GM12878 (cell line): ENCODE measurements at regions of chr14 and their contacts with region 1.

Region 1: DNA sequence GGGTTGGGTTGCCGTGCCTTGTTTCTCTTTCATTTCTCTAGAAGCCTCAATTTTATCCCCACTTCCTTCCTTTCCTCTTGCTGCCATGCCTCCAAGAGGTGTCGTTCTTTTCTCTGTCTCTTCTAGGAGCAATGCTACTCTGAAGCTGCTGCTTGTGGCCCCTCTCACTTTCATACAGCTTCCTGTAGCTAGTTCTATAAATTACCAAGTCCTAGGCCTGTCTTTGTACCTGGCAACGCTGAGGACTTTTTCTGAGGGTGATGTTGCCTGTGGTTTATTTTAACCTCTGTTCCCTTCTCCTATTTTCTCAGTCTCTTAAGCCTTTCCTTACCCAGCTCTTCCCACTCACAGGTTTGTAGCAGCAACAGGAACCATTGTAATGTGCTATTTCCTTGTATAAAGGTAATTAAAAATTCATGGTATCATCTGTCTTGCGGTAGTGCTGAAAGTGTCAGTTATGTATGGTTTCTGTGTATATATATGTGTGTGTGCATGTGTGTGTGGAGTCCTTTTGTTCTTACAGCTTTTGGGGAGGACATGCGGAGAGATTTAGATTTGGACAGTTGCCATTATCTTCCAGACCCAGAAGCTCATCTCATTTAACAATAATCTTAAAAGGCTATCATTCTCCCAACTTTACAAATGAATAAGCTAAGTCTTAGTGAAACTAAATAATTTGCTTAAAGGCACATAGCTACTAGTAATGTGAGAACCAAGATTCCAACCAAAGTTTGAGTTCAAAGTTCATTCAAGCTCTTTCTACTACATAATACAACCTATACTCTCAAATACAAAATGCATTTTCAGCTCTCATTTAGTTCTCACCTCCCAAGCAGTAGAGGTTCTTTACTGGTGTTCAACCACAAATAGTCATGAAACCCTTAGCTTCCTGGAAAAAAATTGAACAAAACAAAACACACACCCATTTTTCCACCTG is 43.8 kb downstream of the DDHD1 start:
- DNase-seq: peak; percentile 82
- ATAC-seq: peak; percentile 87
- H3K4me3 ChIP-seq: peak overlapping the region; percentile 63
- H3K27ac ChIP-seq: peak overlapping the region; percentile 98
- H3K4me1 ChIP-seq: peaks cover 22% of the 10 kb centered on the region
- H3K27me3 ChIP-seq: no peaks in the 10 kb centered on the region
- CTCF ChIP-seq: no peak
- EP300 ChIP-seq: peak; percentile 16 to 62; a peak in 1 of 4 replicates
- POLR2A ChIP-seq: no peak; the same call in 1 of the 2 replicates
- RAD21 ChIP-seq: peak; percentile 25; the same call in 1 of the 2 replicates

Region 2: GRCh38 chr14:53093206-53093605 is 16.2 kb before region 1 on chr14:
- CTCF ChIA-PET with region 1: interaction called, 6 read pairs
- POLR2A ChIA-PET with region 1: interaction called, 4 read pairs
- RAD21 ChIA-PET with region 1: interaction called, 17 read pairs
- SMC1A ChIA-PET with region 1: interaction called, 42 read pairs
- in situ Hi-C with region 1: no loop called
- intact Hi-C with region 1: no loop called
- DNase-seq: no peak
- ATAC-seq: no peak
- H3K4me3 ChIP-seq: no peak overlapping the region
- H3K27ac ChIP-seq: no peak overlapping the region
- H3K4me1 ChIP-seq: no peaks in the 10 kb centered on the region
- H3K27me3 ChIP-seq: no peaks in the 10 kb centered on the region
- CTCF ChIP-seq: no peak
- EP300 ChIP-seq: no peak
- POLR2A ChIP-seq: no peak
- RAD21 ChIP-seq: no peak

Region 3: DNA sequence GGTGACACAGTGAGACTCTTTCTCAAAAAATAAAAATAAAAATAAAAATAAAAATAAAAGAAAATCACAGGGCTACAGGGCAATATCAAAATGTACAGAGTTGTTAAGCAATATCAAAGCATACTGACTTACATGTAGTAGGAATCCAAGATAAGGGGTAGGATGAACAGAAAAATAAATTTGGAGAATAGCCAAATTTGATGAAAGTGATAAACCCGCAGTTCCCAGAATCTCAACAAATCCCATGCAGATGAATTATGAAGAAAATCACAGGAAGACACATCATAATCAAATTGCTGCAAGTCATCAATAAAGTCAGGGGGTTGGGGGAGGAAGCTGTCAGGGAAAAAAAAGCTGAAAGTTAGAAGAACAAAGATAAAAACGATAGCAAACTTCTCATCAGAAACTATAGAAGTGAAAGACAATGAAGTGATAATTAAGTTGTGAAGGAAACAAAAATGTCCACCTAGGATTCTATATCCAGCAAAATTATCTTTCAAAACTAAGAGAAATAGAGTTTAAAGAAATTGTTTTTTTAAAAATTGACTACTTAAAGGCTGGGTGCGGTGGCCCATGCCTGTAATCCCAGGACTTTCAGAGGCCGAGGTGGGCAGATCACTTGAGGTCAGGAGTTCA is 28.3 kb after region 1 on chr14:
- CTCF ChIA-PET with region 1: interaction called, 3 read pairs
- POLR2A ChIA-PET with region 1: interaction called, 3 read pairs
- RAD21 ChIA-PET with region 1: interaction called, 10 read pairs
- SMC1A ChIA-PET with region 1: interaction called, 8 read pairs
- in situ Hi-C with region 1: no loop called
- intact Hi-C with region 1: no loop called
- DNase-seq: no peak
- ATAC-seq: no peak
- H3K4me3 ChIP-seq: no peak overlapping the region
- H3K27ac ChIP-seq: no peak overlapping the region
- H3K4me1 ChIP-seq: peaks cover 5% of the 10 kb centered on the region; the same call in 1 of the 2 replicates
- H3K27me3 ChIP-seq: no peaks in the 10 kb centered on the region
- CTCF ChIP-seq: no peak
- EP300 ChIP-seq: no peak
- POLR2A ChIP-seq: no peak
- RAD21 ChIP-seq: no peak

Region 4: GRCh38 chr14:53152890-53153701 is 43.7 kb after region 1 on chr14 and contains the start of gene DDHD1:
- CTCF ChIA-PET with region 1: interaction called, 60 read pairs
- POLR2A ChIA-PET with region 1: interaction called, 48 read pairs
- RAD21 ChIA-PET with region 1: interaction called, 98 read pairs
- SMC1A ChIA-PET with region 1: interaction called, 127 read pairs
- in situ Hi-C with region 1: no loop called
- intact Hi-C with region 1: loop called (anchors 2 kb)
- DNase-seq: peak; percentile 51
- ATAC-seq: peak; percentile 81
- H3K4me3 ChIP-seq: peak within 1 kb of the TSS; percentile 94
- H3K27ac ChIP-seq: peak within 1 kb of the TSS; percentile 90
- H3K4me1 ChIP-seq: peaks cover 9% of the 10 kb centered on the region
- H3K27me3 ChIP-seq: no peaks in the 10 kb centered on the region
- CTCF ChIP-seq: no peak
- EP300 ChIP-seq: 0 out of 4 replicates have a peak, but pooled peaks of 1 of the 2 experiments have one; percentile 44
- POLR2A ChIP-seq: peak; percentile 85
- RAD21 ChIP-seq: no peak
- polyA plus RNA-seq, gene DDHD1: 7.7 to 10.0 TPM

Region 5: DNA sequence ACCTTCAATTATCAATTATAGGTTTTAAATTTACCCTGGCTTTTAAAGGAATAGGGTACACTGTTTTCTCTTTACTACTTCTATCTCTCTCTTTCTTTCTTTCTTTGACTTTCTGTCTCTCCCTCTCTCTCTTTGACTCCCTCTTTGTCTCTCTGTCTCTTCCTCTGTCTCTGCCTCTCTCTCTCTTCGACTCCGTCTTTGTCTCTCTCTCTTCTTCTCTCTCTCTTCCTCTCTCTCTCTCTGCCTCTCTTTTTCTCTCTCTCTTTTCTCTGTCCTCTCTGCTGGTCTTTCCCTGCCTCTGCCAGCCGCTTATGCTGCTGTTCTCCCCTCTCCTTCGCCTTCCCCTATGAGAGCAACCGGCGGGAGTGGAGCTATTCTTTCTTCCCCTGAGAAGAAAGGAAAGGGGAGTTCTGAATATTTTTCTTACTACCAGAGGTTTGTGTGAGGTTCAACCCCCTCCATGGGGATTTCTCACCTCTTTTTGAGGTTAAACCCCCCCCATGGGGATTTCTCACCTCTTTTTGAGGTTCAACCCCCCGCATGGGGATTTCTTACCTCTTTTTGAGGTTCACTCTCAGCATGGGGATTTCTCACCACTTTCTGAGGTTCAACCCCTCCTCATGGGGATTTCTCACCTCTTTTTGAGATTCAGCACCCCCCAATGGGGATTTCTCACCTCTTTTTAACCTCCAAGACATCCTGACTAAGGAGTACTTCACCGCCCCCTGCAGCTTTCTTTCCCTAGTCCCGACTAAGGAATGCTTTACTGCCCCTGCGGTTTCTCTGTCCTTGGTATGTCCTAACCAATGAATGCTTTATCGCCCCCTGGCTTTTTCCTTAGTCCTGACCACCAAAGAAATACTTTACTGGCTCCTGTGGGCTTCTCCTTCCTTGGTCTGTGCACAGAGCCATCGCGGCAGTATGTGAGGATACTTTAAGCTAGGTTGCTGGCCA is 71.2 kb after region 1 on chr14:
- CTCF ChIA-PET with region 1: interaction called, 3 read pairs
- POLR2A ChIA-PET with region 1: interaction called, 3 read pairs
- RAD21 ChIA-PET with region 1: interaction called, 18 read pairs
- SMC1A ChIA-PET with region 1: interaction called, 3 read pairs
- in situ Hi-C with region 1: no loop called
- intact Hi-C with region 1: loop called (anchors 1 kb)
- DNase-seq: peak; percentile 78
- ATAC-seq: peak; percentile 92
- H3K4me3 ChIP-seq: no peak overlapping the region
- H3K27ac ChIP-seq: peak overlapping the region; percentile 39; the same call in 1 of the 2 replicates
- H3K4me1 ChIP-seq: peaks cover 11% of the 10 kb centered on the region
- H3K27me3 ChIP-seq: no peaks in the 10 kb centered on the region
- CTCF ChIP-seq: peak; percentile 11 to 56 (median 26); a peak in 3 of 6 replicates
- EP300 ChIP-seq: peak in 1 of 2 experiments; percentile 78; a peak in 3 of 4 replicates
- POLR2A ChIP-seq: no peak
- RAD21 ChIP-seq: peak; percentile 53